Heart right ventricle (tissue), 16 donors: ENCODE measurements at regions of chr11 and their contacts with region 1.

Region 1: DNA sequence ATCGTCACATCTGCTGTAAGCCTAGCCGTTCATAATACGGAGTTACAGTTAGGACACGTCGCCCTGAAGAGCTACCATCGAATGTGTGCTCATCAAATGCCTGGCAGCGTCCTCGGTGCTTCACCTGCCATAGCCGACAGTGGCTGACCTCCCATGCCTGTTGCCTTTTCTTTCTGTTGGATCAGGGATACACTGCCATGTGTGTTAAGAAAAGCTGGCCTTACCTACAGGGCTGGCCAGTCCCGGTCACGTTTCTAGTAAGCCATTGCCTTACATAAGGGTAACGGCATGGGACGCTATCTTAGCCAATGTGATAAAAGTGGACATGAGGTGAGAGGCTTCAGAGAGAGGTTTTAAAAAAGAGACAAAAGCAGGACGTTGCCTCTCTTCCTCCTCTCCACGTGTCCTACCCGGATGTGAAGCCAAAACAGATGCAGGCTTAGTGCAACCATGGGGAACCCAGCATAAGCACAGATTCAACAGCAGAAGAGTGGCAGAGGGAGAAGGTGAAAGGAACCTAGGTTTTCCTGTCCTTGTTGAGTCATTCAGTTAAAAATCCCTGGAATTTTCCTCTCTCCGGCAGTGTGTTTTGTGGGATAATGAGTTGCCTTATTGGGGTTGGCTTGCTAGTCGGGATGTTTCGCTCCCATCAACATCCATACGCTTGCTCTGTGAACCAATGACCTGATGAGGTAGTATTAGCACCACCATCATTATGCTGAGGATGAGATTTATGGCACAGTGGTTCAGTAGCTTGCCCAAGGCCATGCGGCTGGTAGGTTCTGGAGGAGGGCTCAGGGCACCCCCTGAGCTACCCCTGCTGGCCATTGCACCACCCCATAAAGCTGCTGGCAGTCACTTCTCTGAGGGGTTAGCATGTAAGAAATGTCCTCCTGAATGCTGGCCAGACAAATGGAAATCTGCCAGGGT is 67.4 kb upstream of the B3GAT1 start:
- DNase-seq: no peak
- ATAC-seq: no peak
- H3K4me3 ChIP-seq: no peak overlapping the region
- H3K27ac ChIP-seq: no peak overlapping the region
- H3K4me1 ChIP-seq: no peaks in the 10 kb centered on the region
- H3K27me3 ChIP-seq: peaks cover 0 to 95% (median 36%) of the 10 kb centered on the region in 7 donors
- CTCF ChIP-seq: no peak

Region 2: GRCh38 chr11:133886029-133886428 is 593.4 kb before region 1 on chr11:
- intact Hi-C with region 1: no loop called
- DNase-seq: no peak
- ATAC-seq: no peak
- H3K4me3 ChIP-seq: no peak overlapping the region
- H3K27ac ChIP-seq: no peak overlapping the region
- H3K4me1 ChIP-seq: no peaks in the 10 kb centered on the region
- H3K27me3 ChIP-seq: peaks cover 0 to 4% (median 0%) of the 10 kb centered on the region in 7 donors
- CTCF ChIP-seq: no peak

Region 3: GRCh38 chr11:134849833-134850232 is 370.4 kb after region 1 on chr11:
- intact Hi-C with region 1: loop called in 1 of 10 experiments (anchors 2 kb)
- DNase-seq: no peak
- ATAC-seq: no peak
- H3K4me3 ChIP-seq: no peak overlapping the region
- H3K27ac ChIP-seq: no peak overlapping the region
- H3K4me1 ChIP-seq: no peaks in the 10 kb centered on the region
- H3K27me3 ChIP-seq: peaks cover 0 to 35% (median 7%) of the 10 kb centered on the region in 7 donors
- CTCF ChIP-seq: no peak